Activated CD4-positive, alpha-beta T cell treated with anti-CD3 and anti-CD28 coated beads for 36 hours (primary cell): ENCODE measurements at regions of chr3 and their contacts with region 1.

Region 1: DNA sequence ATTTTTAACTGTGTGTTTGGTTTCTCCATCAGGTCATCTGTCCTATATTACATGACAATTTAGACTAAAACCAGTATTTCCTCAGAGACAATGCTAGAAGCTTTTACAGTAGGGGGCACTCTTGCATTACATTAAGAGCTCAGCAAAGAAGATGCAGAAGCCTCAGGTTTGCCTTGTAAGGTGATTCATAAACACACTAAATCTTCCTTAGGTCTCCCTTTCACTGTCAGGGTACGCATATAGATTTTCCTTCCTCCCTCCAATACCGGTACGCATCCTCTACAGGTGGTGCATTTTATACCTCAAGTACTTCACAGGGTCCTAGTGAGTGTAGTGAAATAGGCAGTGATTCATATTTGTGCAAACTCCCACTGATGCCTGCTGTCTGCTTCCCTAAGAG is 46.5 kb downstream of the CD86 start:
- DNase-seq: no peak
- ATAC-seq: peak; percentile 54
- H3K4me3 Mint-ChIP-seq: peak overlapping the region; percentile 60
- H3K27ac Mint-ChIP-seq: peak overlapping the region; percentile 79
- H3K4me1 Mint-ChIP-seq: peaks cover 42% of the 10 kb centered on the region
- H3K27me3 Mint-ChIP-seq: no peaks in the 10 kb centered on the region

Region 2: DNA sequence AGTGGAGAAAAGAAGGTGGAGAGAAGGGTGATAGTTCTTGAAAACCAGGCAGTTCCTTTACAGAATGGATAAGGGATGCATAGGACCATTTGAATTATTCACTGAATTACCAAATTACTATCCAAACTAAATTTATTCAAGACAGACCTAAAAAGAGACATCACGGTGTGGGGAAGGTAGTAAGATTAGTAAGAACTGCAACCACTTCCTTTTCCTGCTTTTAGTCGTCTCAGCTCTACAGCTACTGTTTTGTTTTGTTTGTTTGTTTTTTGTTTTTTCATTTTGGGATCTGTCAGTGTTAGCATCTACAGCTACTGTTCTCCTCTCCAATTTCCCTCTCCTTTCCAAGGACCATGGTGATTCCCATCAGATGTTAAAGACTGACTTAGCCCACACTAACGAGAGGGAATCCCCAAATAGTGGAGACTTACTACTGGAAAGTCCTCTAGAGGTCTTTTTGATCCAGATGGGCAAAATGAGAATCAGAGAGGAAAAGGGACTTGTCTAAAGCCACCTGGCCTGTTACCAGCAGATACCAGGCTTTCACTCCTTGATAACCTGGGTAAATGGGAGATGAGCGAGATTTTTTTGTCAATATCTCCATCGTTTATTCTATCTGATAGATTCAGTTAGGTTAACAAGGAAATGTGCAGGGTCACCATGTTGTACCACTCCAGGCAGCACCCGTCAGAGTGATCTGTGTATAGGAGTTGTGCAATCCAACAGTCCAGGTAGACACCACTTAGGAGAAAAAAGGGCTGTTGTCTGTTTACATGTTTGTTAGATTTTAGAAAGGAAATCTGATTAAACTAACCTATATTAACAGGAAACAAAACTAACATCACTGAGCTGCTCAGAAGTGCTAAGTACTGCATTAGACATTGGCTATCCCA is 446.9 kb before region 1 on chr3:
- CTCF ChIA-PET with region 1: no interaction called
- POLR2A ChIA-PET with region 1: no interaction called
- intact Hi-C with region 1: loop called (anchors 5 to 10 kb)
- DNase-seq: no peak
- ATAC-seq: peak; percentile 90
- H3K4me3 Mint-ChIP-seq: peak overlapping the region; percentile 13
- H3K27ac Mint-ChIP-seq: peak overlapping the region; percentile 91
- H3K4me1 Mint-ChIP-seq: peaks cover 80% of the 10 kb centered on the region
- H3K27me3 Mint-ChIP-seq: no peaks in the 10 kb centered on the region

Region 3: GRCh38 chr3:122111974-122112373 is 10.3 kb after region 1 on chr3:
- CTCF ChIA-PET with region 1: interaction called, 10 read pairs
- POLR2A ChIA-PET with region 1: no interaction called
- intact Hi-C with region 1: no loop called
- DNase-seq: no peak
- ATAC-seq: no peak
- H3K4me3 Mint-ChIP-seq: no peak overlapping the region
- H3K27ac Mint-ChIP-seq: no peak overlapping the region
- H3K4me1 Mint-ChIP-seq: no peaks in the 10 kb centered on the region
- H3K27me3 Mint-ChIP-seq: peaks cover 2% of the 10 kb centered on the region

Region 4: DNA sequence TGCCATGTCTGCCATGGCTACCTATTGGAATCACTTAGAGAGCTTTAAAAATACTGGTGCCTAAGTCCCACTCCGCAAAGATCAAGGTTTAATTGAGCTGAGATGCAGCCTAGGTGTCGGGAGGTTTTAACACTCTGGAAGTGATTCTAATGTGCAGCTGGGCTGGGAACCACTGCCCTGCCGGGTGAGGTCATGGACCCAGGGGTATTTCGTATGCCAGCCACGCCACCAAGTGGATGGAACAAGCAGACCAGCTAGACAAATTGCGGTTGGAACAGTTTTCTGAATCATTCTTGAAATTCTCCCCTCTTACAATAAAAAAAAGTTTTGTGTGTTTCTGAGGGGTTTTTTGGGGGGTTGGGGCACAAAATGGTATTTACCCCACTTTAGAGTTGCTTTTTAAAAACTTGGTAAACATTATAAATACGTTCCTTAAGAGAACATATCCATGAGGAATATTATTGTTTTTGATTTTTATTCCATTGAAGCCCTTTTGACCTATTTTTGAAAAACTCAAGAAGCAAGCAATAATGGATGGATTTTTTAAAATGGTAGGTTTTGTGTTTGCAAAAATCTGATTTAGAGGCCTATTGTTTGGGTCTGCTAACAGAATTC is 157.2 kb after region 1 on chr3:
- CTCF ChIA-PET with region 1: interaction called, 32 read pairs
- POLR2A ChIA-PET with region 1: interaction called, 5 read pairs
- intact Hi-C with region 1: loop called (anchors 1 kb)
- DNase-seq: peak; percentile 83
- ATAC-seq: peak; percentile 92
- H3K4me3 Mint-ChIP-seq: no peak overlapping the region
- H3K27ac Mint-ChIP-seq: no peak overlapping the region
- H3K4me1 Mint-ChIP-seq: peaks cover 18% of the 10 kb centered on the region
- H3K27me3 Mint-ChIP-seq: no peaks in the 10 kb centered on the region

Region 5: DNA sequence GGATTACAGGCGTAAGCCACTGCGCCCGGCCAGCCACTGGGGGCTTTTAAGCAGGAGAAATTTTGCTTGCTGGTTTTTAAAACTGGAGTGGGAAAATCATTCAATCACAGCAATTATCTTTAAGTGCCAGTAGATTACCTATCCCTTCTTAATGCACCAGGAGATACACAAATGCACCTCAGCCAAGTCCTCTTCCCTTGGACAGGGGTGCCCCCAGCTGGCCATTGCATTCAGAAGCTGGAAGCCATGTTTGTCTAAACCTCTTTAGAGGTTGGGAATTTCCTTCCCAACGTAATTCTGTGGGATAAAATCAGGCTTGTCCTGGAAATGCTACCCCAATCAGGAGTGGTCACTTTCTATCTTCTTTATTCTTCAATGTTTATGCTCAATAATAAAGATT is 254.8 kb after region 1 on chr3:
- CTCF ChIA-PET with region 1: no interaction called
- POLR2A ChIA-PET with region 1: no interaction called
- intact Hi-C with region 1: loop called in 1 of 2 experiments (anchors 2 kb)
- DNase-seq: peak; percentile 45
- ATAC-seq: no peak
- H3K4me3 Mint-ChIP-seq: no peak overlapping the region
- H3K27ac Mint-ChIP-seq: no peak overlapping the region
- H3K4me1 Mint-ChIP-seq: peaks cover 4% of the 10 kb centered on the region
- H3K27me3 Mint-ChIP-seq: no peaks in the 10 kb centered on the region

Region 6: GRCh38 chr3:122475316-122475715 is 373.7 kb after region 1 on chr3:
- CTCF ChIA-PET with region 1: no interaction called
- POLR2A ChIA-PET with region 1: no interaction called
- intact Hi-C with region 1: no loop called
- DNase-seq: no peak
- ATAC-seq: no peak
- H3K4me3 Mint-ChIP-seq: no peak overlapping the region
- H3K27ac Mint-ChIP-seq: no peak overlapping the region
- H3K4me1 Mint-ChIP-seq: peaks cover 56% of the 10 kb centered on the region
- H3K27me3 Mint-ChIP-seq: no peaks in the 10 kb centered on the region

Region 7: DNA sequence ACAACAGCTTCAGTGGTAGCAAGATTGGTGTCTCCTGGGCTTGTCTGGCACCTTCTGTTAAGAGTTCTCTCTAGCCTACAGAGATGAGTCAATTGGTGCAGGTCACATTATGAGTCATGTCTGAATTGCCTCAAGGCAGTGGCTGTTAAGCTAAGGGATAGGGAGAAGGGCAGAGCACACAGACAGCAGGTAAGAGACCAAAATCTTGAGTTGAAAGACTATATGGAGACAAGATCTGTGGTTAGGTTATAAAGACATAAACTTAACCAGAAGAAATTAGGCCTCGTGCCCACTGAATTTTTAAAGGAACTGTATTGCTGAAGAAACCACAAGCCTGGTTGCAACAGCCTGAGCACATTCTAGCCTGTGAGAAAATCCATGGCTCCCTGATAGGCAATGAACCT is 432.3 kb after region 1 on chr3:
- CTCF ChIA-PET with region 1: no interaction called
- POLR2A ChIA-PET with region 1: no interaction called
- intact Hi-C with region 1: loop called in 1 of 2 experiments (anchors 5 kb)
- DNase-seq: peak; percentile 67
- ATAC-seq: peak; percentile 99
- H3K4me3 Mint-ChIP-seq: no peak overlapping the region
- H3K27ac Mint-ChIP-seq: no peak overlapping the region
- H3K4me1 Mint-ChIP-seq: peaks cover 34% of the 10 kb centered on the region
- H3K27me3 Mint-ChIP-seq: no peaks in the 10 kb centered on the region